Activated naive CD8-positive, alpha-beta T cell treated with anti-CD3 and anti-CD28 coated beads, Interleukin-2, amount 10 ng/mL, durations not matched to agents 7 days and 5 days (primary cell): ENCODE measurements at regions of chr14 and their contacts with region 1.

Region 1: DNA sequence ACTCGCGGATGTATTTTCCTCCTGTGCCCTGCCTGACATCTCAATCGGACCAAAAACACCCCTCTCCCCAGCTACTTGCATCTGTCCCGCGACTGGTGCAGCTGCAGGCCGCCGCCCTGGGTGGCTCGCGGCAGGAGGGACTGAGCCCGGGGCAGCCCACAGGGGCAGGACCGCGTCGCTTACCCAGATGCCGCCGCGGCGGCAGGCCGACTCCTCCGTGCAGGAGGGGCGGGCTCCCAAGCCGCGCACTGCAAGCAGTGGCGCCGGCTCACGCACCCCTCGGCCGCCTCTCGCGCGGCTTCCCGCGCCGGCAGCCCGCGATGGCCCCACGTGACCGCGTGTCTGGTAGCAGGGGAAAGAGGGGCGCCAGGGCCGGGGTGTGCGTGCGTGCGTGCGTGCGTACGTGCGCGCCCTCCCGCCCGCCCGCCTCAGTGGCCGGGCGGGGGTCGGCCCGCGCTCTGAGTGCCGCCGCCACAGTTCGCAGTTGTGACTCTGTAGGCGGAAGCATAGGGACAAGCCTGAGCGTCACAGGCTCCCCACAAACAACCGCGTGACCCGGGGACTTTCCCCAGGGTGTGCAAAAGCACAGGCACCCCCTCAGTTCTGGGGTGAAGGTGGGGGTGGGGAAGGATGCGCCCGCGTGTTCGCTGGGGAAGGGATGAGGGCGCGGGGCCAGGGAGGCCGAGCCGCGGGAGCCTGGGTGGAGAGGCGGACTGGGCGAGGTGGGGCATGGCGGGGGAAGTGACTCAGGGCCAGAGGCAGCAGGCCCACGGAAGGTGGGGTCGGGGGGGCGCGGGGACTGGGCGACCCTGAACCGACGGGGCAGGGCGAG is at the start of gene ZBTB25:
- DNase-seq: peak; percentile 96
- ATAC-seq: peak; percentile 71
- H3K4me3 Mint-ChIP-seq: peak within 1 kb of the TSS; percentile 97
- H3K27ac Mint-ChIP-seq: peak within 1 kb of the TSS; percentile 100
- H3K4me1 Mint-ChIP-seq: peaks cover 35% of the 10 kb centered on the region
- H3K27me3 Mint-ChIP-seq: no peaks in the 10 kb centered on the region
- total RNA-seq, gene ZBTB25: 51.2 to 55.3 TPM

Region 2: DNA sequence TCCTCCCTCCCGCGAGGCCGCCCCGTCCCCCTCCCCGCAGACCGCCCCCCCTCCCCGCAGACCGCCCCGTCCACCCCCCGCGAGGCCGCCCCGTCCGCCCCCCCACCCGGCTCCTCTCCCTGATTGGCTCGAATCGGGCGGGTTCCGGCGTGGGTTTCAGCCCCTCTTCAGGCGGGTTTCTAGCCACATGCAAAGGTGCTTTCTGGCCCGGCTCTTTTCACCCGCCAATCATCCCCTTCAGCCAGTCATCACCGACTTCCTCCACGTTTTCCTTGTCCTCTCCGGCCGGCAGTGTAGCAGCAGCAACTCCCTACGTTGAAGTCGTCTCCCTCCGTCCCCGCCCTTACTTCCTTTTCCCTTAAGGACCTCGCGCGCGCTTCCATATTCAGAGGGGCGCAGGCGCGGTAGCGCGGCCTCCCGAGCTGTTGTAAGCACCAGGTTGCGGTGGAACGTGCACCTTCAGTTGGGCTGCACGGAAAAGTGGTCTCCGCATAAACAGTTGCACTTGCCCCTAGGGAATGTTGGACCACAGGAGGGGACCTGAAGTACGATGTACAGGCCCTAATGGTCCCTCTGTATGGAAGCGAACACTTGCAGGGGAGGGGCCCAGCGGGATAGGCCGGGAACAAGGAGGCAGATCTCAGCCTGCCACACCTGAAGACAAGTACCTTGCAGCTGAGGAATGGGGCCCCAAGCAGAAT is 164.9 kb before region 1 on chr14:
- POLR2A ChIA-PET with region 1: interaction called, 16 read pairs
- DNase-seq: peak; percentile 87
- ATAC-seq: peak; percentile 88
- H3K4me3 Mint-ChIP-seq: peak overlapping the region; percentile 95
- H3K27ac Mint-ChIP-seq: peak overlapping the region; percentile 94
- H3K4me1 Mint-ChIP-seq: peaks cover 24% of the 10 kb centered on the region
- H3K27me3 Mint-ChIP-seq: no peaks in the 10 kb centered on the region

Region 3: DNA sequence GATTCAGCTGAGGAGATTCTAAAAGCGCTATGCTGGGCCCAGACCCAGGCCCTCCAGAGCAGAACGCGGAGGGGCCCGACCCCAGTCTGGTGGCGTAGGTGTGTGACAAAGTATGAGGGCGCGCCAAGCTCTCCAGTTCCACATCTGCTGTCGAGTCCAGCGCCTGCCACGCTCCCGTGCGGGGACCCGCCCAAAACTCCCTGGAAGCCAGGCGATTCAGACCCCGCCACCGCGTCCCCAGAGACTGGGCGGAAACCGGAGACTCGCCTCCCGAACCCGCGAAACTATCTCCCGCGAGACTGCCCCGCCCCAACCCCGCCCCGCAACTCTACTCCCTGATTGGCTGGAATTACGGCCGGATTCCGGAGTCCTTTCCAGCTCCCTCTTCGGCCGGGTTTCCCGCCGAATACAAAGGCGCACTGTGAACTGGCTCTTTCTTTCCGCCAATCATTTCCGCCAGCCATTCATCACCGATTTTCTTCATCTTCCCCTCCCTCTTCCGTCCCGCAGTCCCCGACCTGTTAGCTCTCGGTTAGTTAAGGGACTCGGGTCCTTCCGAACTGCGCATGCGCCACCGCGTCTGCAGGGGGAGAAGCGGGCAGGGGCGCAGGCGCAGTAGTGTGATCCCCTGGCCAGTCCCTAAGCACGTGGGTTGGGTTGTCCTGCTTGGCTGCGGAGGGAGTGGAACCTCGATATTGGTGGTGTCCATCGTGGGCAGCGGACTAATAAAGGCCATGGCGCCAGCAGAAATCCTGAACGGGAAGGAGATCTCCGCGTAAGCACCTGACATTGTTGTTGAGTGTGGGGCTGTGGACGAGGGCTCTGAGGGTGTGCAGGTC is 115.8 kb before region 1 on chr14 and contains the start of gene MTHFD1:
- POLR2A ChIA-PET with region 1: interaction called, 46 read pairs
- DNase-seq: peak; percentile 98
- ATAC-seq: peak; percentile 95
- H3K4me3 Mint-ChIP-seq: peak within 1 kb of the TSS; percentile 84
- H3K27ac Mint-ChIP-seq: peak within 1 kb of the TSS; percentile 93
- H3K4me1 Mint-ChIP-seq: peaks cover 32% of the 10 kb centered on the region
- H3K27me3 Mint-ChIP-seq: no peaks in the 10 kb centered on the region
- total RNA-seq, gene MTHFD1: 146 to 147 TPM

Region 4: GRCh38 chr14:64438181-64438841 is 65.4 kb before region 1 on chr14:
- POLR2A ChIA-PET with region 1: no interaction called
- DNase-seq: no peak
- ATAC-seq: no peak
- H3K4me3 Mint-ChIP-seq: no peak overlapping the region
- H3K27ac Mint-ChIP-seq: peak overlapping the region; percentile 18
- H3K4me1 Mint-ChIP-seq: peaks cover 15% of the 10 kb centered on the region
- H3K27me3 Mint-ChIP-seq: no peaks in the 10 kb centered on the region

Region 5: GRCh38 chr14:64540208-64541157 is 36.8 kb after region 1 on chr14 and contains the start of gene HSPA2:
- POLR2A ChIA-PET with region 1: interaction called, 19 read pairs
- DNase-seq: peak; percentile 97
- ATAC-seq: peak; percentile 95
- H3K4me3 Mint-ChIP-seq: peak within 1 kb of the TSS; percentile 99
- H3K27ac Mint-ChIP-seq: peak within 1 kb of the TSS; percentile 94
- H3K4me1 Mint-ChIP-seq: peaks cover 23% of the 10 kb centered on the region
- H3K27me3 Mint-ChIP-seq: peaks cover 54% of the 10 kb centered on the region
- total RNA-seq, gene HSPA2: 3.3 to 4.0 TPM